ENCODE measurements at regions of chr5 and their contacts with region 1.

Region 1: DNA sequence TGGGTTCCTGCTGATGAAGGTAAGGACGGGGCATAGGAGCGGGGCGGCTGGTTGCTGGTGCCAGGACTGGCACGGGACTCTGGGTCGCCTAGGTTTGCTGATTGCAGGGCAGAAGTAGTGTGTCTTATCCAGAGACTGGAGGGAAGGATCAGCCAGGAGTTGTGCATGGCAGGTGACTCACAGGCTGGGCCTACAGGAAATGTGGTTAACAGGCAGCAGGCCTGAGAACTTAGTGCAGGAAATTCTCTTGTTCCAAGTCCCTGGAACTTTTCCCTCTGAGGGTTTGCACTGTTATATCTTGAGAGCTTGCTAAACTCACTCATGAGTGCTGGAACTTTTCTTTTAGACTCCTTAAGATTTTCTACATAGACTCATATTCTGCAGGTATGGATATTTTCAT is 95.1 kb downstream of the ANXA2R start:
- DNase-seq: peak; percentile 90
- H3K4me3 ChIP-seq: no peak overlapping the region
- H3K27ac ChIP-seq: peak overlapping the region; percentile 22
- H3K4me1 ChIP-seq: peaks cover 23% of the 10 kb centered on the region
- H3K27me3 ChIP-seq: no peaks in the 10 kb centered on the region
- CTCF ChIP-seq: no peak
- POLR2A ChIP-seq: no peak

Region 2: DNA sequence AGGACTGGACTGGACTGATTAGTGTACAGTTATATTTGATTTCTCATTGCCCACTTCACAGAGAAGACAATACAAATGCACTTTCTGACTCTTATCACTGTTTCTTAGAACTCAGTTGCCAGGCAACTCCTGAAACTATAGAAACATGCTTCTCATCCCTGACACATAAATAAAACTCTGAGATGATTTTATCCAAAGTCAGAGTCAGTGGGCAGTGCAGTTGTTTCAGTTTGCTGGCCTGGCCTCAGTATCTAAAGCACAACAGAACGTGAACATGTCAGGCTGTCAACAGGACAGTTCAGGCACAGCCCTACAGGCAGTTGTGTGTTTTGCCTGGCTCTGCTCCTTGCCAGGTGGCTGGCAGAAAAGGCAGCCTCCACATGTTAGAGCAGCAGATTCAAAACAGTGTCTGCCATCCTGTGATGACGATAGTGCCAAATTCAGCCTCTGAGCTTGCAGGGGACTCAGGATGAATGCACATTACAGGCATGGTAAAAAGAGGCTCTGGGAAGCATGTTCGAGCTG is 253.5 kb before region 1 on chr5:
- CTCF ChIA-PET with region 1: no interaction called
- POLR2A ChIA-PET with region 1: no interaction called
- dilution Hi-C with region 1: no loop called
- intact Hi-C with region 1: no loop called
- DNase-seq: no peak
- H3K4me3 ChIP-seq: no peak overlapping the region
- H3K27ac ChIP-seq: no peak overlapping the region
- H3K4me1 ChIP-seq: no peaks in the 10 kb centered on the region
- H3K27me3 ChIP-seq: no peaks in the 10 kb centered on the region
- CTCF ChIP-seq: no peak
- POLR2A ChIP-seq: no peak

Region 3: GRCh38 chr5:42930934-42931333 is 14.1 kb before region 1 on chr5:
- CTCF ChIA-PET with region 1: interaction called, 7 read pairs
- POLR2A ChIA-PET with region 1: no interaction called
- dilution Hi-C with region 1: no loop called
- intact Hi-C with region 1: loop called (anchors 2 kb)
- DNase-seq: no peak
- H3K4me3 ChIP-seq: no peak overlapping the region
- H3K27ac ChIP-seq: no peak overlapping the region
- H3K4me1 ChIP-seq: no peaks in the 10 kb centered on the region
- H3K27me3 ChIP-seq: no peaks in the 10 kb centered on the region
- CTCF ChIP-seq: no peak
- POLR2A ChIP-seq: no peak

Measured in endothelial cell of umbilical vein (primary cell).